ENCODE measurements at regions of chr5 and their contacts with region 1.

Region 1: DNA sequence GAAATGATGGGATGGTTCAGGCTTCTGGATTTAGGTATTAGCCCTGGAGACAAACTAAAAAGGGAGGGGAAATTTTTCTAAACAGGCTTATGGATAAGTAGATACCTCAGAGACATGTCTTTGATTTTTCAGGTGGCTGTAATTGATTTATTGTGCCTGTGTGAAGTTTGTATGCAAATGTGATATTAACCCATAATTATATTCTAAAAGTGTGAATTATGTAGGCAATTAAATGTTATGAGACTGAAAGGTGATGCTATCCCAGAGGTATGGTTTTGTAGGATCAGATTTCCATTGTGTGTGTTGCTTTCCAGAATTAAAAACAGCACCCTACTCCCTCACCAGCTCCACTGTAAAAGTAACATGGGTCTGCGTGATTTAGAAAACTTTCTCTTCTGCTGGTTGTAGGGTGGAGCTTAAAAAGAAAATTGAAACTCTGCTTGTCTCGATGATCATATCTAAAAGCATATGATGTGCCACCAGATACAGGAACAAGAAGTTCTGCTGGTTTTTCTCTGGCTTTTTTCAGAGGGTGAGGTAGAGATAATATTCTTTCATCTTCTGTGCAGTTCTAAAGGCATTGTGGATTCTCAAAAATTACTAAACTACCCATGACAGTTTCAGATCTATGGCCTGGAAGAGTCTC is 71.8 kb upstream of the TAF11L2 start:
- DNase-seq: peak; percentile 11
- ATAC-seq: peak; percentile 93
- H3K4me3 ChIP-seq: no peak overlapping the region; the same call in 1 of the 2 replicates
- H3K27ac ChIP-seq: no peak overlapping the region
- H3K4me1 ChIP-seq: peaks cover 14% of the 10 kb centered on the region
- H3K27me3 ChIP-seq: no peaks in the 10 kb centered on the region
- CTCF ChIP-seq: no peak
- EP300 ChIP-seq: no peak
- POLR2A ChIP-seq: no peak
- RAD21 ChIP-seq: no peak

Region 2: GRCh38 chr5:16378762-16379161 is 1047.5 kb before region 1 on chr5:
- CTCF ChIA-PET with region 1: no interaction called
- POLR2A ChIA-PET with region 1: no interaction called
- RAD21 ChIA-PET with region 1: no interaction called
- SMC1A ChIA-PET with region 1: no interaction called
- in situ Hi-C with region 1: no loop called
- intact Hi-C with region 1: no loop called
- DNase-seq: no peak
- ATAC-seq: no peak
- H3K4me3 ChIP-seq: no peak overlapping the region
- H3K27ac ChIP-seq: no peak overlapping the region
- H3K4me1 ChIP-seq: no peaks in the 10 kb centered on the region
- H3K27me3 ChIP-seq: no peaks in the 10 kb centered on the region
- CTCF ChIP-seq: no peak
- EP300 ChIP-seq: no peak
- POLR2A ChIP-seq: no peak
- RAD21 ChIP-seq: no peak

Region 3: GRCh38 chr5:17412760-17413671 is 13.2 kb before region 1 on chr5:
- CTCF ChIA-PET with region 1: interaction called, 10 read pairs
- POLR2A ChIA-PET with region 1: interaction called, 3 read pairs
- RAD21 ChIA-PET with region 1: interaction called, 4 read pairs
- SMC1A ChIA-PET with region 1: interaction called, 4 read pairs
- in situ Hi-C with region 1: no loop called
- intact Hi-C with region 1: no loop called
- DNase-seq: no peak
- ATAC-seq: peak; percentile 71
- H3K4me3 ChIP-seq: no peak overlapping the region
- H3K27ac ChIP-seq: no peak overlapping the region
- H3K4me1 ChIP-seq: no peaks in the 10 kb centered on the region
- H3K27me3 ChIP-seq: no peaks in the 10 kb centered on the region; a peak in 1 of 4 replicates
- CTCF ChIP-seq: peak in 1 of 3 experiments; percentile 21; a peak in 2 of 6 replicates
- EP300 ChIP-seq: no peak
- POLR2A ChIP-seq: no peak
- RAD21 ChIP-seq: peak; percentile 56

Region 4: GRCh38 chr5:17497446-17497845 is 71.2 kb after region 1 on chr5:
- CTCF ChIA-PET with region 1: no interaction called
- POLR2A ChIA-PET with region 1: no interaction called
- RAD21 ChIA-PET with region 1: no interaction called
- SMC1A ChIA-PET with region 1: no interaction called
- in situ Hi-C with region 1: no loop called
- intact Hi-C with region 1: no loop called
- DNase-seq: no peak
- ATAC-seq: no peak
- H3K4me3 ChIP-seq: no peak overlapping the region
- H3K27ac ChIP-seq: no peak overlapping the region
- H3K4me1 ChIP-seq: no peaks in the 10 kb centered on the region
- H3K27me3 ChIP-seq: no peaks in the 10 kb centered on the region
- CTCF ChIP-seq: no peak
- EP300 ChIP-seq: no peak
- POLR2A ChIP-seq: no peak
- RAD21 ChIP-seq: no peak